Psoas muscle (tissue), 8 donors: ENCODE measurements at regions of chr19 and their contacts with region 1.

Region 1: DNA sequence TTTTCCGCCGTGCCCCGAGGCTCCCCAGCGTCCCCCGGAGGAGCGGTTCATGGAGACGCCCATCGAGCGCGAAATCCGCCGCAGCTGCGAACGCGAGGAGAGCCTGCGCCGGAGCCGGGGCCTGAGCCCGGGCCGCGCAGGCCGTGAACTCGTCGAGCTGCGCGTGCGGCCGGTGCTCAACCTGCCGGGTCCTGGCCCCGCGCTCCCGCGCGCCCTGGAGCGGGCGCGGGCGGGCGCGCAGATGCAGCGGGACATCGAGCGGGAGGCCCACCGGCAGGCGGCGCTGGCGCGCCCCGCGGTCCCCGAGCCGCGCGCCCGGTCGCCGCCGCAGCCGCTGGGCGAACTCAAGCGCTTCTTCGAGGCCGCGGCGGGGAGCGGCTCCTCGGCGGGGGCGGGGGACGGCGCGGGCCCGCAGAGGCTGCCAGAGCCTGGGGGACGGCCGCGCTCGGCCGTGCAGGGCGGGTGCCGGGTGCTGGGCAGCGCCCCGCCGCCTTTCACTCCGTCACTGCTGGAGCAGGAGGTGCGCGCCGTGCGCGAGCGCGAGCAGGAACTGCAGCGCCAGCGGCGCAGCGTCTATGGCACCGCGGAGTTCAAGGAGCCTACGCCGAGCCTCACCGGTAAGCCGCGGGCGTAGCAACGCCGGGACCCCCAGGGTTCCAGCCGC is 807 bp downstream of the MISP3 start:
- DNase-seq: peak; percentile 83 to 89
- ATAC-seq: peak; percentile 45 to 58 (median 56)
- H3K4me3 ChIP-seq: peak overlapping the region; percentile 83
- H3K27ac ChIP-seq: peak overlapping the region; percentile 78
- H3K4me1 ChIP-seq: peaks cover 20% of the 10 kb centered on the region
- H3K27me3 ChIP-seq: no peaks in the 10 kb centered on the region
- CTCF ChIP-seq: peak; percentile 75

Region 2: DNA sequence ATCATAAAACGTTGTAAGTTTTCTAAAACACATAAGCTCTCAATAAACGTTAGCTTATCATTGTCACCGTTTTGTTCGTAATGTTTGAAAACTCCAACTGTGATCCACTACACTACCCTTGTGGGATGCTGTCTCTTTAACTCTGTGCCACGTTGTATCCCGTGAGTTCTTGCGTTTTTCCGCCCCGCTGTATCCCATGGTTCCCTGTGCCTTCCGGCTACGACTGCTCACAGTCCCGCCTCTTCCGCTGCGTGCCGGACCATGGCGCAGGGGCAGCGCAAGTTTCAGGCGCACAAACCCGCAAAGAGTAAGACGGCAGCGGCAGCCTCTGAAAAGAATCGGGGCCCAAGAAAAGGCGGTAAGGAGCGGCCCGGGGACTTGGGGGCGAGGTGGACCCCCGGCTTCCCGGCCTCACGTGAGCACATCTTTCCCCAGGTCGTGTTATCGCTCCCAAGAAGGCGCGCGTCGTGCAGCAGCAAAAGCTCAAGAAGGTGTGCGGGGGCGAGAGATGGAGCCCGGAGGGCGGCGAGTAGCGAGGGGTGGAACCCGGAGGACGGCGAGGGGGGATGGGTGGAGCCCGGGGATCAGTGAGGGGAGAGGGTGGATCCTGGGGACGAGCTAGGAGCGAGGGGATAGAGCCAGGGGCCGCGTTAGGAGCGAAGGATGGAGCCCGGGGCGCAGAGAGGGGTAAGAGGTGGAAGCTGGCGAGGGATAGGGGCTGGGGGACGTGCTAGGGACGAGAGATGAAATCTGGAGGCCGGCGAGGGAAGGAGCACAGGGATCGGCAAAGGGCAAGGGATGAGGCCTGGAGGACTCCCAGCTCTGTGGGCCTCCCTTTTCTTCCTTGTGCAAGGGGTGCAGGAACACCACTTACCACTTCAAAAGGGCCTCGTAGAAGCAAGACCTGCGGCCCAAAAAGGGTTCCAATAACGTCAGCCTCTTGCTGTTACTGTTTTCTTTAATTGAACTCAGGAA is 298.9 kb before region 1 on chr19 and contains the start of gene C19orf53:
- intact Hi-C with region 1: loop called (anchors 10 kb)
- DNase-seq: peak; percentile 91 to 94
- ATAC-seq: peak; percentile 97 to 99 (median 98)
- H3K4me3 ChIP-seq: peak within 1 kb of the TSS; percentile 85
- H3K27ac ChIP-seq: peak within 1 kb of the TSS; percentile 79
- H3K4me1 ChIP-seq: peaks cover 11% of the 10 kb centered on the region
- H3K27me3 ChIP-seq: no peaks in the 10 kb centered on the region
- CTCF ChIP-seq: no peak
- total RNA-seq, gene C19orf53: 88.9 to 109 (median 95.5) TPM

Region 3: DNA sequence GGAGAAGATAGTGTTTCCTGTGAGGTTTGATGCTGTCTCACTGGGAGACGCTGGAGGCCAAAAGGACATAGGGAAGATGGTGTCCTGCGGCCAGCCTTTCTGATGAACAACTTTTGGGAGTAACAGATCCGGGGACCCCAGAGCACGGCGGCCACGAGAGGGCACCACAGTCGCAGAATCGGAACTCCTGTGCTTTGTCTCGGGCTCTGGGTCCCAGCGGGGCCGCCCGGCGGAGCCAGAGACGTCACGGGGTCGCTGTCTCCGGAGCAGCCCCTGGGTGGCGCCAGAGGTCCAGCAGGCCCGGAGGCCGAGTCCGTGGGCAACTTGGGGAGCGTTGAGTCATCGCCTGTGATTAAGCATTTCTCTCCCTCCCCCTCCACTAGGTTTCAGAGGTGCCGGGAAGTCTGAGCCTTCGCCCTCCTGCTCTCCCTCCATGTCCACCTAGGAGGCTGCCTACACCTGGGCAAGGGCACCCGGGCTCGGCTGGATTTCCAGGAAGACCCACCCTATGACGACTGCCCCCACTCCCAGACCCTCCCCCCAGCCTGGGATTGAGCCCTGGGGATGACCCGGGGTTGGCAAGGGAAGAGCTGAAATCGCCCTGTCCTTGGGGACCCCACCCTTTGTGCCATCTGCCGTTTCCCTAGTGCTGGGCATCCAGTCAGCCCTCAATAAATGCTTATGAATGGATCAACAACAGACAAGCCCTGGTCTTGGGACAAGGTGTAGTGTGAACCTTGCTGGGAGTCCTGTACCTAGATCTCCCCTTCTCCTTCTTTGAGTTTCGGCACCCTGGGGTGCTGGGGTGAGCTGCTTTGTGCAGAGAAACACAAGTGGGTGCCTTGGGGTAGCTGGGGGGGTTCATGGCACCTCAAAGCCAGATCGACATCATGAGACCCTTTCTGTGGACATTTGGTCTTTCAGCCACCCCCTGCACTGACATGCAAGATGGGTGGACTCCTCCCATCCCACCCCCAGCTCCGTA is 193.0 kb before region 1 on chr19:
- intact Hi-C with region 1: loop called (anchors 1 to 5 kb)
- DNase-seq: peak; percentile 99
- ATAC-seq: peak; percentile 98 to 100 (median 98)
- H3K4me3 ChIP-seq: peak overlapping the region; percentile 53
- H3K27ac ChIP-seq: peak overlapping the region; percentile 83
- H3K4me1 ChIP-seq: peaks cover 15% of the 10 kb centered on the region
- H3K27me3 ChIP-seq: no peaks in the 10 kb centered on the region
- CTCF ChIP-seq: peak; percentile 98

Region 4: DNA sequence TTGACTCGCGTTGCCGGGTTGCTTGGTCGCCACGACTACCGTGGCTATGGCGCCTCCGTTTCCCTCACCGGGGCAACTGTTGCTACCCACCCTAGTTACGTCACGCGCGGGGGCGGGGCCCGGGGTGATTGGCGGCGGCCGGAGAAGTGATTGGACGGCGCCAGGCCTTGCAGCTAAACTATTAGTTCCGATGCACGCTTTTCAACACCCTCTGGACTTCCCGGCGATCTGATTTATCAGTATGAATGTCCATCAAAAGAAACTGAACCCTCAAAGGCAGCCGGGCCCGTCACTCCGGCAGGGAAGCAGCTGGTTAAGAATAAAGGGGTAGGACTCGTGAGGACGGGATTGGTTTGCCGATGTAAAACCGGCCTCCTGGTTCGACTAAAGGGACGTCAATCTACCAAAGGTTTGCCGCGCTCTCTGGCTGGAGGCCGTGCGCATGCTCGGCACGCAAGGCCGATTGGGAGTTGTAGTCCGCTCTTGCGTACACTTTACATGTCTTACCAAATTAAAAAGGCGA is 67.1 kb before region 1 on chr19 and contains the start of gene RFX1:
- intact Hi-C with region 1: loop called in 1 of 2 experiments (anchors 5 kb)
- DNase-seq: peak; percentile 100
- ATAC-seq: peak; percentile 84 to 88 (median 87)
- H3K4me3 ChIP-seq: peak within 1 kb of the TSS; percentile 91
- H3K27ac ChIP-seq: peak within 1 kb of the TSS; percentile 98
- H3K4me1 ChIP-seq: peaks cover 37% of the 10 kb centered on the region
- H3K27me3 ChIP-seq: no peaks in the 10 kb centered on the region
- CTCF ChIP-seq: no peak
- total RNA-seq, gene RFX1: 5.9 to 10.1 (median 7.8) TPM

Region 5: DNA sequence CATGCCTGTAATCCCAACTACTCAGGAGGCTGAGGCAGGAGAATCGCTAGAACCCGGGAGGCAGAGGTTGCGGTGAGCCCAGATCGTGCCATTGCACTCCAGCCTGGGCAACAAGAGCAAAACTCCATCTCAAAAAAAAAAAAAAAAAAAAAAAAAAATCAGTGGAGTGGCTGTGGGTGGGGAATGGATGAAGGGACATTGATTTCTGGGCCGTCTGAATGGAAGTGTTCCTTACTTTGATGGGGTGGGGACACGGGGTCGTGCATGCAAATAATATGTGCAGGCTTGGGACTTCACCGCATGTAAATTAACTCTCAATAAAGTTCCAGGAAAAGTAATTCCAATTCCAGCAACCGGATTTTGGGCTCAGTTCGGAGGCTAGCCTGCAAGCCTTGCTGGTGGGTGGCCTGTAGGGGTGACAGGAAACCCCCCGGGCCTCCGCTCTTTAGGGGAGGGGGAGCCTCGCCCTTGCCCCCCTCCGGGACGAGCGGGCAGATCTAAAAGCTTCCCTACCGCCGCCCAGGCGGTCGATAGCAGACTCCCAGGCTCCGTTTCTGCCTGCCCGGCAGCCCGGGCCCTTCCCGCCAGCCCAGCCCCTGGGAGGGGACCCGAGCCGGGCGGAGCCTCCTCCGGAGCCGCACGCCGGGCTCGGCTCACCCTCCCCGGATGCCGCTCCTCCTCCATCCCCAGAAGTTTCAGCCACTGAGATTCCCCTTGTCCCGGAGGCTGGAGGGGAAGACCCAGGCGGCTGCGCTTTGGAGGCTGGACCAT is 259.9 kb after region 1 on chr19:
- intact Hi-C with region 1: no loop called
- DNase-seq: no peak
- ATAC-seq: no peak
- H3K4me3 ChIP-seq: peak overlapping the region; percentile 5
- H3K27ac ChIP-seq: no peak overlapping the region
- H3K4me1 ChIP-seq: no peaks in the 10 kb centered on the region
- H3K27me3 ChIP-seq: peaks cover 0 to 22% (median 2%) of the 10 kb centered on the region in 3 donors
- CTCF ChIP-seq: no peak